ENCODE measurements at regions of chr7 and their contacts with region 1.

Region 1: GRCh38 chr7:149598721-149599306 is 101.2 kb upstream of the ZNF746 start:
- DNase-seq: peak; percentile 7
- ATAC-seq: peak; percentile 84
- H3K4me3 ChIP-seq: no peak overlapping the region
- H3K27ac ChIP-seq: no peak overlapping the region
- H3K4me1 ChIP-seq: no peaks in the 10 kb centered on the region
- H3K27me3 ChIP-seq: no peaks in the 10 kb centered on the region
- CTCF ChIP-seq: peak; percentile 44
- EP300 ChIP-seq: no peak
- POLR2A ChIP-seq: no peak
- RAD21 ChIP-seq: no peak

Region 2: DNA sequence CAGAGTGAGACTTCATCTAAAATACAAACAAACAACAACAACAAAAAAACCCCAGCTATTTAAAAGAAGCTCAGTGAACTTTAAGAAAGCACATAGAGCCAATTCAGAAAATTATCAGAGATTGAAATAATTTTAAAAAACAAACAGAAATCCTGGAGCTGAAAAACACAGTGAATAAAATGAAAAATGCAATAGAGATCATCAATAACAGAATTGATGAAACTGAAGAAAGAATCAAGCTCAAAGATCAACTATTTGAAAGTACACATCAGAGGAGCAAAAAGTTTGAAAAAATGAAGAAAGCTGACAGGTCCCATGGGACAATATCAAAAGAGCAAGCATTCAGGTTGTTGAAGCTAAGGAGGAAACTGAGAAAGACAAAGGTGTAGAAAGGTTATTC is 89.0 kb before region 1 on chr7:
- CTCF ChIA-PET with region 1: no interaction called
- POLR2A ChIA-PET with region 1: no interaction called
- in situ Hi-C with region 1: no loop called
- intact Hi-C with region 1: no loop called
- DNase-seq: no peak
- ATAC-seq: no peak
- H3K4me3 ChIP-seq: no peak overlapping the region
- H3K27ac ChIP-seq: no peak overlapping the region
- H3K4me1 ChIP-seq: no peaks in the 10 kb centered on the region
- H3K27me3 ChIP-seq: no peaks in the 10 kb centered on the region; a peak in 1 of 5 replicates
- CTCF ChIP-seq: no peak
- EP300 ChIP-seq: no peak
- POLR2A ChIP-seq: no peak
- RAD21 ChIP-seq: no peak

Region 3: DNA sequence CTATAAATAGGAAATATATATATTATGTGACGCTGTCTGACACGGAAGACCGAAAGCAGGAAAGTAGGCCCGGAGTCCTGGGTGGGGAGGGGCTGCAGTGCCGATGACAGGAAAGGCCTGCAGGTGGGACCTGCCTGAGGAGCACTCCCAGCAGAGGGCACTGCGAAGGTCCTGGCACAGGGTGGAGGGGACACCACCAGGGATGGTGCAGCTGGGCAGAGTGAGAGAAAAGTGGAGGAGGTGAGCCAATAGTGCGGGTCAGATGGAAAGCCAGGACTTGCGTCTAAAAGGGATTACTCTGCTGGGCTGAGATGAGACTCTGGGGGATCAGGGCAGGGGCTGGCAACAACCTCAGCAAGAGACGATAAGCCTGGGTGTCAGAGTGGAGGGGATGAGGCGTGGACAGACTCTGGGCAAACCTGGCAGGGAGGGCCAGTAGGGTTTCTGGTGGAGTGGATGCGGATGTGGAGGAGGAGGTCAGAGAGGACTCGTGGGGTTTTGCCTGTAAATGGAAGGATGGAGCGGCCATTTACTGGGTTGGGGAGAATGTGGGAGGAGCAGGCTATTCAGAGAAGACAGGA is 17.0 kb after region 1 on chr7:
- CTCF ChIA-PET with region 1: no interaction called
- POLR2A ChIA-PET with region 1: no interaction called
- in situ Hi-C with region 1: no loop called
- intact Hi-C with region 1: loop called (anchors 2 kb)
- DNase-seq: no peak
- ATAC-seq: peak; percentile 93
- H3K4me3 ChIP-seq: no peak overlapping the region
- H3K27ac ChIP-seq: no peak overlapping the region
- H3K4me1 ChIP-seq: no peaks in the 10 kb centered on the region
- H3K27me3 ChIP-seq: no peaks in the 10 kb centered on the region
- CTCF ChIP-seq: peak; percentile 36
- EP300 ChIP-seq: no peak
- POLR2A ChIP-seq: no peak
- RAD21 ChIP-seq: no peak